ENCODE measurements at regions of chr14 and their contacts with region 1.

Region 1: GRCh38 chr14:51846631-51847488 is 13.6 kb upstream of the GNG2 start:
- DNase-seq: peak; percentile 97
- H3K4me3 Mint-ChIP-seq: peak overlapping the region; percentile 89
- H3K27ac Mint-ChIP-seq: peak overlapping the region; percentile 99
- H3K4me1 Mint-ChIP-seq: peaks cover 65% of the 10 kb centered on the region
- H3K27me3 Mint-ChIP-seq: peaks cover 2% of the 10 kb centered on the region

Region 2: GRCh38 chr14:51750542-51750941 is 96.3 kb before region 1 on chr14:
- intact Hi-C with region 1: no loop called
- DNase-seq: no peak
- H3K4me3 Mint-ChIP-seq: no peak overlapping the region
- H3K27ac Mint-ChIP-seq: no peak overlapping the region
- H3K4me1 Mint-ChIP-seq: no peaks in the 10 kb centered on the region
- H3K27me3 Mint-ChIP-seq: no peaks in the 10 kb centered on the region

Region 3: GRCh38 chr14:51828017-51828797 is 18.7 kb before region 1 on chr14:
- intact Hi-C with region 1: loop called (anchors 1 kb)
- DNase-seq: peak; percentile 88
- H3K4me3 Mint-ChIP-seq: peak overlapping the region; percentile 48
- H3K27ac Mint-ChIP-seq: peak overlapping the region; percentile 18
- H3K4me1 Mint-ChIP-seq: peaks cover 3% of the 10 kb centered on the region
- H3K27me3 Mint-ChIP-seq: peaks cover 5% of the 10 kb centered on the region

Region 4: GRCh38 chr14:51873221-51873893 is 26.5 kb after region 1 on chr14:
- intact Hi-C with region 1: loop called (anchors 1 kb)
- DNase-seq: peak; percentile 79
- H3K4me3 Mint-ChIP-seq: peak overlapping the region; percentile 53
- H3K27ac Mint-ChIP-seq: peak overlapping the region; percentile 91
- H3K4me1 Mint-ChIP-seq: peaks cover 51% of the 10 kb centered on the region
- H3K27me3 Mint-ChIP-seq: no peaks in the 10 kb centered on the region

Region 5: DNA sequence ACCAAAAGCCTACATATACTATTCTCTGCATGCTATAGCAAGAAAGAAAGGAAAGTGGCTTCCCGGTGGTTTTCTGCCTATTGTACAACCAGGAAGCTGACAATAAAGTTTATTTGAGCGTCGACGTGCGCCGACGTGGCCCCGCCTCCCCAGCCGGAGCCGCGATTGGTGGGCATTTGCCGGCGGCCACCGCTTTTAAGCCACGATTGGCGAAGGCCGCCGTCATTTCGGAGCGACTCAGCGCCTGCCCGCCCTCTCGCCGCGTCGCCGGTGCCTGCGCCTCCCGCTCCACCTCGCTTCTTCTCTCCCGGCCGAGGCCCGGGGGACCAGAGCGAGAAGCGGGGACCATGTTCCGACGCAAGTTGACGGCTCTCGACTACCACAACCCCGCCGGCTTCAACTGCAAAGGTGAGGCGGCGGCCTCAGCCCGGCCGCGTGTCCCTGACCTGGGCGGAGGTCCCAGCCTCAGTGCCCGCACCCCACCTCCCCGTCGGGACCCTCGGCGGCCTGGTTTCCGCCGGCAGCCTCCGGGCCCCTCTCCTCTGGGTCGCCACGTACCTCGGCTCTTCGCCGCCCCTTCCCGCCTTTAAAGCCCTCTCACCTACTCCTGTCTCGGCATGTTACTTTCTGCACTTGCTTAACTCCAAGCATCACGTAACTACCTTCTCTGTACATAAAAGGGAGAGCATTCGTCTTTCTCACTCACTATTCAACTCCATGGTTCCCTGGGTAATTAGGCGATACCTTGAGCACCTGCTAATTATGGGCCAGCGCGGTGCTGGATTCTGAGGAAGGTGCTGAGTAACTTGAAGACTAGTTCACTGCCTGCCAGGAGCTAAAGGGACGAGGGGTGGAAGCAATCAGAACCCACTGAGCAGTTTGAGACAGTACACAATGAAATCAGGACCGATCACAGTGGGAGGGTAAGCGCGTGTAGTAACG is 142.7 kb after region 1 on chr14 and contains the start of gene RTRAF:
- intact Hi-C with region 1: loop called (anchors 1 kb)
- DNase-seq: peak; percentile 98
- H3K4me3 Mint-ChIP-seq: peak within 1 kb of the TSS; percentile 93
- H3K27ac Mint-ChIP-seq: peak within 1 kb of the TSS; percentile 96
- H3K4me1 Mint-ChIP-seq: peaks cover 18% of the 10 kb centered on the region
- H3K27me3 Mint-ChIP-seq: no peaks in the 10 kb centered on the region
- total RNA-seq, gene RTRAF: 226 and 229 TPM in 2 replicates

Region 6: DNA sequence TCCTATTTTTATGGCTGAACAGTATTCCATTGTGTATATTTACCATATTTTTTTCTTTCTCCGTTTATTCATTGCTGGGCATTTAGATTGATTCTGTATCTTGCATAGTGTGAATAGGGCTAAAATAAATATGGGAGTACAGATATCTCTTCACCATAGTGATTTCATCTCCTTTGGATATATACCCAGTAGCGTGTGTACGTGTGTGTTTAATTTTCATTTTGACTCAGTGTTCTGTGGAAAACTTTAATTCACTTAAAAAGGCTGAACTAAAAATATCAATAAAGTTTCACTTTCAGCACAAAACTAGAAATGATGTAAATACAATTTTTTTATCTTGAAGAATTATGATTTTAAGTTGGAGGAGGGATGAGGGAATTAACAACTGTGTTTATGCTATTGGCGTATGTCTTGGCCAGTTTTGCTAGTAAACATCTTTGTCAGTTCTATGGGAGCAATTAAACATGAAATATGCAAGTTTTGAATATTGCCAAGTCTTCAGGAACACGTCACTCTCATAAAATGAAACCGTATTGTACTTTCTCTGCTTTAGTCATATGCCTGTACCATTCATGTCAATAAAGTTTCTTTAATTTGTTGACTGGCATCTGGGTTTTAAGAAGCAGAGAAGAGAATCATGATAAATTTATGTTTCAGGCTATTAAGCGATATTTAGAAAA is 567.0 kb after region 1 on chr14:
- intact Hi-C with region 1: loop called (anchors 5 kb)
- DNase-seq: no peak
- H3K4me3 Mint-ChIP-seq: peak overlapping the region; percentile 66
- H3K27ac Mint-ChIP-seq: peak overlapping the region; percentile 90
- H3K4me1 Mint-ChIP-seq: peaks cover 55% of the 10 kb centered on the region
- H3K27me3 Mint-ChIP-seq: no peaks in the 10 kb centered on the region

Measured in activated CD4-positive, alpha-beta T cell treated with anti-CD3 and anti-CD28 coated beads, Interleukin-2, amount 10 ng/mL, durations not matched to agents 24 days and 14 days (primary cell).